Activated T-helper 2 cell treated with anti-CD3 and anti-CD28 coated beads, Interferon-gamma antibody, Interleukin-2, Interleukin-4, amounts not matched to agents 10 μg/mL and 5 μg/mL and 100 μg/mL, durations not matched to agents 14 hours and 24 hours and 36 hours (primary cell): ENCODE measurements at regions of chr6 and their contacts with region 1.

Region 1: DNA sequence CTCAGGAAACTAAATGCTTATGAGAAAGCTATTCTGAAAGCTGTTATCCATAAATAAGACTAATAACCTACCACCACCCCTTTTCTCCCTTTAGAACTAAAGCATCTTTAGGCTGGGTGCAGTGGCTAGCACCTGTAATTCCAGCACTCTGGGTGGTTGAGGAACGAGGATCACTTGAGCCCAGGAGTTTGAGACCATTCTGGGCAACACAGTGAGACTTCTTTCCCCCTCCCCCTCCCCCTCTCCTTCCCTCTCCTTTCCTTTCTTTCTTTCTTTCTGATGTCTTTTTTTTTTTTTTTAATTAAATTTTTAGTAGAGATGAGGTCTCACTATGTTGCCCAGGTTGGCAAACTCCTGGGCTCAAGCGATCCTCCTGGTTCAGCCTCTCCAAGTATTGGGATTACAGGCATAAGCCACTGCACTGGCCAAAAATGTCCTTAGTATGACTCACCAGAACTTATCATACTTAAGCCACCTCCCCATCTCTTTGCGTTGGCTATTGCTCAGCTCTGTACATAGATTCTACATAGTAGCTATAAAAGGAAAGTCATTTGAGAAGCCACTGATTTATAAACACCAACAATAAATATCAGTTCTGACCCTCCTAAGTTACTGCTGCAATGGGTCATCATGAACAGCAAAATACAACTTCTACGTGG is 54.8 kb upstream of the SPDEF start:
- DNase-seq: no peak
- H3K4me3 Mint-ChIP-seq: no peak overlapping the region
- H3K27ac Mint-ChIP-seq: no peak overlapping the region
- H3K4me1 Mint-ChIP-seq: peaks cover 24% of the 10 kb centered on the region
- H3K27me3 Mint-ChIP-seq: no peaks in the 10 kb centered on the region

Region 2: DNA sequence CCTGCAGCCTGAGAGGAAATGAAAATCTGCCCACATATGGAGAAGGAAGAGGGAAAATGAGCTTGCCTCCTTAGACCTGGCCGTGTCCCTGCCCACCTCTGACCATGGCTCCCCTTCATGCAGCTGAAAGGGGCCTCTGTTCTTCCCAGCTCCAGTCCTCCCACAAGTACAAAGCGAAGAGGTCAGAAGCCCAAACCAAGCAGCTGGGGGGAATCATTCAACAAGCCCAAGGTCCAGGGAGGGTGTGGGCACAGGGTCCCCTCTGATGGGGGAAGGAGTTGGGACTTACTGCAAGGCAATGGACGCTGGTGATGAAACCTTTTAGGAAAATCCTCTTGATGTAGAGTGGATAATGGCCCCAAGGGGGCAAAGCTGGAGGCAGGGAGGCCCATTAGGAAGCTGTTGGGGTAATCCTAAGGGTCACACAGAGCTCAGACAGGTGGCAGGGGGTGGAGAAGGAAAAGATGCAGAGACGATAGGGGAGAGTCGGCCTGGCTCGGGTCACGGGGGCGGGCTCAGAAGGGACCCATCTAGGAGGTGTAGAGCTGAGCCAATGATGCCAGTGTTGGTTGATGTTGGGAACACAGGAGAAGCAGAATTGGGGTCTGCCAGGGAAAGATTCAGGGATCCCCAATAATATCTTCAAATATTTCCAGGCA is 449.0 kb before region 1 on chr6:
- intact Hi-C with region 1: loop called (anchors 2 kb)
- DNase-seq: no peak
- H3K4me3 Mint-ChIP-seq: no peak overlapping the region
- H3K27ac Mint-ChIP-seq: no peak overlapping the region
- H3K4me1 Mint-ChIP-seq: no peaks in the 10 kb centered on the region
- H3K27me3 Mint-ChIP-seq: peaks cover 32% of the 10 kb centered on the region

Region 3: GRCh38 chr6:34459899-34460593 is 150.9 kb before region 1 on chr6:
- intact Hi-C with region 1: loop called (anchors 1 kb)
- DNase-seq: peak; percentile 19
- H3K4me3 Mint-ChIP-seq: no peak overlapping the region
- H3K27ac Mint-ChIP-seq: no peak overlapping the region
- H3K4me1 Mint-ChIP-seq: peaks cover under 1% of the 10 kb centered on the region
- H3K27me3 Mint-ChIP-seq: peaks cover 7% of the 10 kb centered on the region